GM18951 (cell line): ENCODE measurements at regions of chr15 and their contacts with region 1.

Region 1: GRCh38 chr15:44738340-44738984 is 2.1 kb downstream of the TRIM69 start:
- POLR2A ChIP-seq: no peak

Region 2: GRCh38 chr15:43966646-43967045 is 771.8 kb before region 1 on chr15:
- in situ Hi-C with region 1: no loop called
- POLR2A ChIP-seq: no peak

Region 3: DNA sequence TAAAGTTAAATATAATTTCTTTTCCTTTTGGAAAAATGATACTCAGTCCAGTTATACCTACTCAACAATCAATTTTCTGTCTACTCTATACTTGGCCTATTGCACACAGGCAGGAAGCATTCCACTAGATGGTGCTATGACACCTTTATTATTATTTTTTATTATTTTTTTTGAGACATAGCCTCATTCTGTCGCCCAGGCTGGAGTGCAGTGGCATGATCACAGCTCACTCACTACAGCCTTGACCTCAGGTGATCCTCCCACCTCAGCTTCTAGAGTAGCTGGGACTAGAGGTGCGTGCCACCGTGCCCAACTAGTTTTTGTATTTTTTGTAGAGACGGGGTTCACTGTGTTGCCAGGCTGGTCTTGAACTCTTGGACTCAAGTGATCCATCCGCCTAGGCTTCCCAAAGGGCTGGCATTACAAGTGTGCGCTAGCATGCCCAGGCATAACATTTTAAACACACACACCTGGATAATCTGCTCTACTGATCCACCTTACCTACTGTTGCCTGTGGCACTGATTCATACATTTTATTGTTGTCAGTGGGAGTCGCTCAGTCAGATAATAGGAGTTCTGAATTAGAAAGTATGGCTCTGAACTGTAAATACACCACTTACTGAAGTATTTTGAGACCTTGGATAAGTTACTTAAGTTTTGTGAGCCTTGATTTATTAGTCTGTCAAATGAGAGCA is 145.3 kb before region 1 on chr15:
- in situ Hi-C with region 1: loop called (anchors 10 kb)
- POLR2A ChIP-seq: no peak

Region 4: GRCh38 chr15:44706946-44707636 is 31.4 kb before region 1 on chr15:
- in situ Hi-C with region 1: no loop called
- POLR2A ChIP-seq: no peak